ENCODE measurements at regions of chr12 and their contacts with region 1.

Region 1: DNA sequence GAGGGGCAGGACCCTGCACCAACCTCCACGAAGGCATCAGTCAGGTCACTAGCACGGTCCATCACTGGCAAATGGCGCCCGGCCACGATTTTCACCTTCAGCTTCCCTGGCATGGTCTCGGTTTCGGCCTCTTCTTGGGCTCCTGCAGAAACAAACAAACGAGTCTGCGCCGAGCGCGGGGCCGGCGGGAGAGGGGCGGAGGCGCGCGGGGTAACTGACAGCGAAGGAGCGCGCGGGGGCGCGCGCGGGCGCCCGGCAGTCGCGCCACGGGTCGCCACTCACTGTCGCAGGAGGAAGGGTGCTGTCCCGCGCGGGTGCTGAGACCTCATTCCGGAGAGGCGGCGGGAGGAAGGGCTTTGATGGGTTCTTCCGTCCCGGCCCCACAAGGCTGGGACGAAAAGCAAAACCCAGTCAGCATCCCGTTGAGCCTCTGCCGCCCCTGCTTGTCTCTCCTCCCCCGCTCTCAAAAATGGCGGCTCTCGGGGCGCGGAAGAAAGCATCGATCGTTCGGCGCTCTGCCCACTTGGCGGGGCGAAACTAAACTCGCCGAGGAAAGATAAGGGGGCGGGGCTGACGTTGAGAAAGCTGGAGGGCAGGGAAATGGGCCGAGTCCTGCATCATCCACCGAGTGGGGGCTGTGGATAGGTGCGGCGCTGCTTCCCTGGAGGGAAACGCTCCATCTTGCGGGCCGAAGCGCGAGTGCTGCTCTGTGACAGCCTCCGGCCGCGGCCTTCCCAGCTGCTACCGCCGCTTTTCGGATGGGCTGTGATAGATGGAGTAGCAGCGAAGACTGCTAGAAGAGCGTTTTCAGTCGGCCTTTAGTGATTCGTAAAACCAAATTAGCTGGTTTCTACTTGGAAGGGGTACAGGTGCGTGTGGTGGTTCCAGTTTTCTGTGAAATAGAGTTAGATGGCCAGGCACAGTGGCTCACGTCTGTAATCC is at the start of gene C2CD5:
- DNase-seq: peak; percentile 95 to 98 (median 96)
- H3K4me3 ChIP-seq: peak within 1 kb of the TSS; percentile 87 to 97
- H3K4me3 Mint-ChIP-seq: peak within 1 kb of the TSS; percentile 89 to 98 (median 94)
- H3K27ac ChIP-seq: peak within 1 kb of the TSS; percentile 78
- H3K27ac Mint-ChIP-seq: peak within 1 kb of the TSS; percentile 95 to 97 (median 96)
- H3K4me1 ChIP-seq: peaks cover 44% of the 10 kb centered on the region
- H3K4me1 Mint-ChIP-seq: peaks cover 29 to 45% (median 36%) of the 10 kb centered on the region in 4 donors
- H3K27me3 ChIP-seq: no peaks in the 10 kb centered on the region
- H3K27me3 Mint-ChIP-seq: peaks cover 0 to 4% of the 10 kb centered on the region in 2 donors
- total RNA-seq, gene C2CD5: 59.3 to 59.8 TPM

Region 2: DNA sequence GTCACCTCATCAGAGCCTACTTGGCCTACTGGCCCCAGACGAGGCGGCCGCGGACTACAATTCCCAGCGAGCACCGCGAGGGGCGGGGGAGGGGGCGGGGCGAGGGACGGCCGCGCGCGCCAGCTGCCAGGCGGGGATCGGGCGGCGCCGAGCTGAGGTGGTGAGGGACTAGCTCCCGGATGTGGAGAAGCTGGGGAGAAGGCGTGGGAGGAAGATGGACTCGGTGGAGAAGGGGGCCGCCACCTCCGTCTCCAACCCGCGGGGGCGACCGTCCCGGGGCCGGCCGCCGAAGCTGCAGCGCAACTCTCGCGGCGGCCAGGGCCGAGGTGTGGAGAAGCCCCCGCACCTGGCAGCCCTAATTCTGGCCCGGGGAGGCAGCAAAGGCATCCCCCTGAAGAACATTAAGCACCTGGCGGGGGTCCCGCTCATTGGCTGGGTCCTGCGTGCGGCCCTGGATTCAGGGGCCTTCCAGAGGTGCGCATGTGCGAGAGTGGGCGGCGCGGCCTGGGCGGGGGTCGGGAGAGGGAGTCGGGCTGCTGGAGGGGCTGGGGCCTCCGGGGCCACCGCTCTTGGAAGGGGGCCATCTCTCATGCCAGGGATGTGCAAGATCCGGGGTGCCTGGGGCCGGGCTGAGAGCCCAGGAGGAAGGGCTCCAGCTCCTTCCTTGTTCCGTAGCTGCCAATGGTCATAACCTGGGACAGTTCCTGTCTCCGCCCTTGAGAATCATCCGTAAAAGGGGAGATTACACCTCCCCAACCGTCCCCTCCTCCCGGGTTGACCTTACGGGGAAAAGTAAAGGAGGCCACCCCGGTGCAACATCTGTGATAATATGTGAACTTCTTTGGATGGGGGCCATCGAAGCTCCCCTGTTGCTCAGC is 498.0 kb before region 1 on chr12 and contains the start of gene CMAS:
- CTCF ChIA-PET with region 1: no interaction called
- POLR2A ChIA-PET with region 1: interaction called, 13 read pairs
- intact Hi-C with region 1: loop called (anchors 1 kb)
- DNase-seq: peak; percentile 63 to 81 (median 71)
- H3K4me3 ChIP-seq: peak within 1 kb of the TSS; percentile 87 to 91
- H3K4me3 Mint-ChIP-seq: peak within 1 kb of the TSS; percentile 90 to 98 (median 96)
- H3K27ac ChIP-seq: peak within 1 kb of the TSS; percentile 75
- H3K27ac Mint-ChIP-seq: peak within 1 kb of the TSS; percentile 85 to 95 (median 91)
- H3K4me1 ChIP-seq: peaks cover 35% of the 10 kb centered on the region
- H3K4me1 Mint-ChIP-seq: peaks cover 33 to 50% (median 39%) of the 10 kb centered on the region in 4 donors
- H3K27me3 ChIP-seq: no peaks in the 10 kb centered on the region
- H3K27me3 Mint-ChIP-seq: peaks cover 0 to 1% of the 10 kb centered on the region in 2 donors
- total RNA-seq, gene CMAS: 20.1 to 20.3 TPM

Region 3: DNA sequence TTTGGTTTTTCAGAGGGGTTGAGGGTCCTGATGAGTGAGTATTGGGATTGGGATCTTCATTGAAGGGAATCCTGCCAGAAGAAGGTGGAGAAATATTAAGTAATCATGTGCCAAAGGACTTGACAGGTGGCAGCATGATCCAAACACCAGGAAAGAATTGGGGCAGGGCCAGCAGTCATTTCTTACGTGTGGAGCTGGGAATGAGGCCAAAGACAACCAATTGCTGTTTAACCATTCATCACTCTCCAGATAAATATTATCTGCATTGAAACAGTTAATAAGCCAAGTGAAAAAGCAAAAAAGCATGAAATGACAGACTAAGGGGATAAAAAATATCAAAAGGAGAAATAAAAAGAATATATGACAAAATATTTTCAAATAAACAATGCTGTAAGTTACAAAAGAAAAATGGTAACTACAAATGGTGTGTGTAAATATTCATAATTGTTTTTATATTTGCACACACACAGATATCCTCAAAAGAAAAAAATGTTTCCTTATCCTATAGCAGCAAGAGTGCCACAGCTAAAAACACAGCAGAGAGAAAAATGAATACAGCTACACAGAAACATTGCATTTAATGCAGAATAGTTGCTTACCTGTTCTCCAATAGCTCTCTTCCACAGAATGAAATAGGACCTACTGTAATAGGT is 26.1 kb before region 1 on chr12:
- CTCF ChIA-PET with region 1: no interaction called
- POLR2A ChIA-PET with region 1: no interaction called
- intact Hi-C with region 1: no loop called
- DNase-seq: no peak
- H3K4me3 ChIP-seq: no peak overlapping the region
- H3K4me3 Mint-ChIP-seq: no peak overlapping the region
- H3K27ac ChIP-seq: no peak overlapping the region
- H3K27ac Mint-ChIP-seq: peak overlapping the region in 1 of 7 donors; percentile 35
- H3K4me1 ChIP-seq: no peaks in the 10 kb centered on the region
- H3K4me1 Mint-ChIP-seq: peaks cover 0 to 9% (median 2%) of the 10 kb centered on the region in 4 donors
- H3K27me3 ChIP-seq: no peaks in the 10 kb centered on the region
- H3K27me3 Mint-ChIP-seq: no peaks in the 10 kb centered on the region

Region 4: DNA sequence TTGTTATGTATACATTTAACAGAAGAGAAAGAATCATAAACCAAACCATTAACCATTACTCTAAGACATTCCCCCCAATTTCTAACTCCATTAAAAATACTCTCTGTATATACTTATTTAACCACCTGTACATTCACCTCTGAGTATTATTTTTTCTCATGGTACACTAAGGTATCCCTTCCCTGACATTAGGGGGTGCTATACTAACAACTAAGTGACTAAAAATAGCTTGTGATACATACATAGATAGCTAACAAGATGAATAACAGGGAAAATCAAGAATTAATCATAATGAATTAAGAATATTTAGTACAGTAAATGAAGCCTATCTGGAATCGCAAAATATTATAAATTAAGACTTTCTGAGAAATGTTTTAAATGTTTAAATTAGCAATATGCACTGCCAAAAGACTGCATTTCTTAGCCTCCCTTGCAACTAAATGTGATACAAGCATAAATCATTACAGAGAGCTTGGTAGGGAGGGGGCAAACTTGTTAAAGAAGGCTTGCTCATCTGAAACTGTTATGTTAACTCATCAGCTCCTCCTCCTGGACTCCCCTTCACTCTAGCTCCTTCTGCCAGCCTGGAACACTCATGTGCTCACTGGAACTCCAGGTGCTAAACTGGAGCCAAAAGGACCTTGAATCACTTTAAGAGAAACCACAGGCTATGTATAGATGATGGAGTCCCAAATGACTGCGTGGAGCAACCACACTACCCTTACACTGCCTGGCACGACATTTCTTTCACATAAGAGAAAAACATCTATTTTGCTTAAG is 14.8 kb before region 1 on chr12:
- CTCF ChIA-PET with region 1: interaction called, 11 read pairs
- POLR2A ChIA-PET with region 1: interaction called, 15 read pairs
- intact Hi-C with region 1: loop called (anchors 2 kb)
- DNase-seq: peak in 4 of 5 donors; percentile 42 to 54 (median 51)
- H3K4me3 ChIP-seq: no peak overlapping the region
- H3K4me3 Mint-ChIP-seq: no peak overlapping the region
- H3K27ac ChIP-seq: no peak overlapping the region
- H3K27ac Mint-ChIP-seq: no peak overlapping the region
- H3K4me1 ChIP-seq: no peaks in the 10 kb centered on the region
- H3K4me1 Mint-ChIP-seq: peaks cover 8 to 18% (median 12%) of the 10 kb centered on the region in 4 donors
- H3K27me3 ChIP-seq: no peaks in the 10 kb centered on the region
- H3K27me3 Mint-ChIP-seq: no peaks in the 10 kb centered on the region

Region 5: GRCh38 chr12:22684140-22685118 is 140.1 kb after region 1 on chr12:
- CTCF ChIA-PET with region 1: no interaction called
- POLR2A ChIA-PET with region 1: no interaction called
- intact Hi-C with region 1: loop called (anchors 5 kb)
- DNase-seq: peak in 4 of 5 donors; percentile 4 to 16 (median 12)
- H3K4me3 ChIP-seq: no peak overlapping the region
- H3K4me3 Mint-ChIP-seq: no peak overlapping the region
- H3K27ac ChIP-seq: no peak overlapping the region
- H3K27ac Mint-ChIP-seq: peak overlapping the region in 1 of 7 donors; percentile 37
- H3K4me1 ChIP-seq: peaks cover 14% of the 10 kb centered on the region
- H3K4me1 Mint-ChIP-seq: peaks cover 12 to 23% (median 15%) of the 10 kb centered on the region in 4 donors
- H3K27me3 ChIP-seq: no peaks in the 10 kb centered on the region
- H3K27me3 Mint-ChIP-seq: no peaks in the 10 kb centered on the region

Region 6: GRCh38 chr12:22781339-22781738 is 237.0 kb after region 1 on chr12:
- CTCF ChIA-PET with region 1: no interaction called
- POLR2A ChIA-PET with region 1: no interaction called
- intact Hi-C with region 1: no loop called
- DNase-seq: no peak
- H3K4me3 ChIP-seq: no peak overlapping the region
- H3K4me3 Mint-ChIP-seq: no peak overlapping the region
- H3K27ac ChIP-seq: no peak overlapping the region
- H3K27ac Mint-ChIP-seq: no peak overlapping the region
- H3K4me1 ChIP-seq: no peaks in the 10 kb centered on the region
- H3K4me1 Mint-ChIP-seq: no peaks in the 10 kb centered on the region
- H3K27me3 ChIP-seq: no peaks in the 10 kb centered on the region
- H3K27me3 Mint-ChIP-seq: peaks cover 4 to 8% of the 10 kb centered on the region in 2 donors